BJ (cell line): ENCODE measurements at regions of chr6 and their contacts with region 1.

Region 1: GRCh38 chr6:147738099-147738837 is 229.8 kb downstream of the SAMD5 start:
- DNase-seq: no peak
- H3K4me3 ChIP-seq: no peak overlapping the region
- H3K27me3 ChIP-seq: no peaks in the 10 kb centered on the region
- CTCF ChIP-seq: no peak

Region 2: GRCh38 chr6:147586044-147586443 is 152.2 kb before region 1 on chr6:
- CTCF ChIA-PET with region 1: no interaction called
- POLR2A ChIA-PET with region 1: no interaction called
- DNase-seq: no peak
- H3K4me3 ChIP-seq: no peak overlapping the region
- H3K27me3 ChIP-seq: no peaks in the 10 kb centered on the region
- CTCF ChIP-seq: no peak

Region 3: GRCh38 chr6:147699637-147700036 is 38.6 kb before region 1 on chr6:
- CTCF ChIA-PET with region 1: no interaction called
- POLR2A ChIA-PET with region 1: no interaction called
- DNase-seq: no peak
- H3K4me3 ChIP-seq: no peak overlapping the region
- H3K27me3 ChIP-seq: no peaks in the 10 kb centered on the region
- CTCF ChIP-seq: no peak

Region 4: GRCh38 chr6:147710890-147711289 is 27.4 kb before region 1 on chr6:
- CTCF ChIA-PET with region 1: no interaction called
- POLR2A ChIA-PET with region 1: interaction called, 19 read pairs
- DNase-seq: no peak
- H3K4me3 ChIP-seq: no peak overlapping the region
- H3K27me3 ChIP-seq: no peaks in the 10 kb centered on the region
- CTCF ChIP-seq: no peak

Region 5: GRCh38 chr6:147808640-147809039 is 70.4 kb after region 1 on chr6:
- CTCF ChIA-PET with region 1: no interaction called
- POLR2A ChIA-PET with region 1: no interaction called
- DNase-seq: no peak
- H3K4me3 ChIP-seq: no peak overlapping the region
- H3K27me3 ChIP-seq: no peaks in the 10 kb centered on the region
- CTCF ChIP-seq: no peak

Region 6: GRCh38 chr6:147821295-147821897 is 83.1 kb after region 1 on chr6:
- CTCF ChIA-PET with region 1: no interaction called
- POLR2A ChIA-PET with region 1: no interaction called
- DNase-seq: no peak
- H3K4me3 ChIP-seq: no peak overlapping the region
- H3K27me3 ChIP-seq: no peaks in the 10 kb centered on the region
- CTCF ChIP-seq: no peak